CD4-positive, alpha-beta T cell (primary cell): ENCODE measurements at regions of chr17 and their contacts with region 1.

Region 1: GRCh38 chr17:45021607-45022287 is 29.7 kb downstream of the DCAKD start:
- DNase-seq: peak; percentile 29 to 85 (median 58)
- ATAC-seq: peak; percentile 85
- H3K4me3 ChIP-seq: peak overlapping the region; percentile 44
- H3K4me3 Mint-ChIP-seq: peak overlapping the region; percentile 39
- H3K27ac ChIP-seq: no peak overlapping the region
- H3K27ac Mint-ChIP-seq: no peak overlapping the region
- H3K4me1 ChIP-seq: peaks cover 36% of the 10 kb centered on the region
- H3K4me1 Mint-ChIP-seq: peaks cover 24% of the 10 kb centered on the region
- H3K27me3 ChIP-seq: peaks cover 34 to 40% of the 10 kb centered on the region in 2 experiments
- H3K27me3 Mint-ChIP-seq: peaks cover 39% of the 10 kb centered on the region
- CTCF ChIP-seq: peak; percentile 66

Region 2: DNA sequence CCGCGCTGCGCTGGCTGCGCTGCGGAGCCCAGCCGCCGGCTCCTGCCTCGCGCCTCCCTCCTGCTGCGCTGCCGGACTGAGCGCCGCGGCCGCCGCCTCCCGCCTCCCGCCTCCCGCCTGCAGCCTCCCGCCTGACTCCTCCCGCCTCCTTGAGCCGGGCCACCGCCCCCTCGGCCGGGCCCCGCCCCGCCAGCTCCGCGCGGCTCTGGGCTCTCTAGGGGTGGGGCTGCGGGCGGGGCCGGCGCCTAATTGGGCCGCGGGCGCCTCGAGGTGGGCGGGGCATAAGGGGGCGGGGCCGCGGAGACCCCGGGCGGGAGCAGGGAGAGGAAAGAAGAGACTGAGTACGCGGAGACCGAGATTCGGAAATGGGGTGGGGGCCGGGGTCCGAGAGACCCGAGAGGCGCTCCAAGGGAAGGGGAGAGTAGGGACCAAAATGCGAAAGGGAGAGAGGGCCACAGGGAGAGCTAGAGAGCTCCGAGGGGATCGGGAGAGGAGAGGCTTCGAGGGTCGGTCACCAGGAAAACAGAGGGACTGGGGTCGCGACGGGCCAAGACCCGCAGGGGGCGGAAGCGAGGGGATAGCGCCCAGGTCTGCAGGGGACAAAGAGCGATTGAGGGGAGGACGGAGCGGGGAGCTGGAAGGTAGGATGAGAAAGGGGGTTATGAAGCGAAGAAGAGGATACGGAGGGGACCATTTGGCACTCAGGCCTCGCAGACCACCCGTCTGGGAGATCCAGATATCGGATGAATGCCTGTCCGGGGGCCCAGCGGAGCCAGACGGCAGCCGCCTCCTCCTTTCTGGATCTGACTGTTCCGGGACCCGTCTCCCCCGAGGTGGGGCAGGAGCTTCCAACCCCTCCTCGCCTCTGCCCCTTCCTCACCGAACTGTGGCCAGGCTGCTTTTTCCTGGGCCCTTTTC is 53.3 kb before region 1 on chr17 and contains the start of gene C1QL1:
- CTCF ChIA-PET with region 1: no interaction called
- POLR2A ChIA-PET with region 1: no interaction called
- intact Hi-C with region 1: loop called in 1 of 2 experiments (anchors 5 kb)
- DNase-seq: peak; percentile 64 to 93 (median 85)
- ATAC-seq: peak; percentile 92
- H3K4me3 ChIP-seq: peak within 1 kb of the TSS; percentile 54
- H3K4me3 Mint-ChIP-seq: peak within 1 kb of the TSS; percentile 83
- H3K27ac ChIP-seq: no peak within 1 kb of the TSS
- H3K27ac Mint-ChIP-seq: no peak within 1 kb of the TSS
- H3K4me1 ChIP-seq: peaks cover 42% of the 10 kb centered on the region
- H3K4me1 Mint-ChIP-seq: peaks cover 32% of the 10 kb centered on the region
- H3K27me3 ChIP-seq: peaks cover 42 to 54% of the 10 kb centered on the region in 2 experiments
- H3K27me3 Mint-ChIP-seq: peaks cover 63% of the 10 kb centered on the region
- CTCF ChIP-seq: peak; percentile 28
- total RNA-seq, gene C1QL1: not detected

Region 3: DNA sequence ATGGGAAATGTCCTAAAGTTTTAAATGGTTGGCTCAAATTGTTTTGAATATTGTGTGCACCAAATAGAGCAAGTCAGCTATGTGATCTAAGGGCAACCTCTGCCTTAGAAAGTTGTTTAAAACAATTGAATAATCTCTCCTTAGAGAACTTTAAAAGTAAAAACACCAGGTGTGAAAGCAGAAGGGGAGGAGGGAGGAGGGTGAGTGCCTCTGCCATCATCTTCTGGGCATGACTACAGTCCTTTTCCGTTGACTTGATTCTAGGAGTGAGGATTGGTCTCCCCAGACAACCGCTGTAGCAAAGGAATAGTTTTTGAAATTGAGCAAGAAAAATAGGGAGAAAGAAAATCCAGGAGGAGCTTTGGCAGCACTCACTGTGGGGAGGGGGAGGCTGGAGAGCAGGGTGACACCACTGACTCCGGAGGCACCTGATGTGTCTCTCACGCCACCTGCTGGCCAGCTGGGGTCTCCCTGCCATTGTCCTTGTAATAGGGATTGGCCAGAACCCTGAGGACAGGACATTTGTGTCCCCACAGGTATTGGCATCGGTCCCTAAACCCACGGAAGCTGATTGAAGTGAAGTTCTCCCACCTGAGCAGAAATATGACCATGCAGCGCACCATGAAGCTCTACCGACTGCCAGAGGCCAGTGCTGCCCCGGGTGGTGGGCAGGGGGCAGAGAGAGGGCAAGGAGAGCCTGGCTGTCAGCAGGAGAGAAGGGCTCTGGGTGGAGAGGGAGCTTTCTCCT is 77.3 kb after region 1 on chr17:
- CTCF ChIA-PET with region 1: interaction called, 3 read pairs
- POLR2A ChIA-PET with region 1: no interaction called
- intact Hi-C with region 1: loop called in 1 of 2 experiments (anchors 5 kb)
- DNase-seq: peak; percentile 61 to 86 (median 72)
- ATAC-seq: peak; percentile 90
- H3K4me3 ChIP-seq: no peak overlapping the region
- H3K4me3 Mint-ChIP-seq: no peak overlapping the region
- H3K27ac ChIP-seq: no peak overlapping the region
- H3K27ac Mint-ChIP-seq: no peak overlapping the region
- H3K4me1 ChIP-seq: no peaks in the 10 kb centered on the region
- H3K4me1 Mint-ChIP-seq: peaks cover 7% of the 10 kb centered on the region
- H3K27me3 ChIP-seq: no peaks in the 10 kb centered on the region
- H3K27me3 Mint-ChIP-seq: no peaks in the 10 kb centered on the region
- CTCF ChIP-seq: peak; percentile 91

Region 4: DNA sequence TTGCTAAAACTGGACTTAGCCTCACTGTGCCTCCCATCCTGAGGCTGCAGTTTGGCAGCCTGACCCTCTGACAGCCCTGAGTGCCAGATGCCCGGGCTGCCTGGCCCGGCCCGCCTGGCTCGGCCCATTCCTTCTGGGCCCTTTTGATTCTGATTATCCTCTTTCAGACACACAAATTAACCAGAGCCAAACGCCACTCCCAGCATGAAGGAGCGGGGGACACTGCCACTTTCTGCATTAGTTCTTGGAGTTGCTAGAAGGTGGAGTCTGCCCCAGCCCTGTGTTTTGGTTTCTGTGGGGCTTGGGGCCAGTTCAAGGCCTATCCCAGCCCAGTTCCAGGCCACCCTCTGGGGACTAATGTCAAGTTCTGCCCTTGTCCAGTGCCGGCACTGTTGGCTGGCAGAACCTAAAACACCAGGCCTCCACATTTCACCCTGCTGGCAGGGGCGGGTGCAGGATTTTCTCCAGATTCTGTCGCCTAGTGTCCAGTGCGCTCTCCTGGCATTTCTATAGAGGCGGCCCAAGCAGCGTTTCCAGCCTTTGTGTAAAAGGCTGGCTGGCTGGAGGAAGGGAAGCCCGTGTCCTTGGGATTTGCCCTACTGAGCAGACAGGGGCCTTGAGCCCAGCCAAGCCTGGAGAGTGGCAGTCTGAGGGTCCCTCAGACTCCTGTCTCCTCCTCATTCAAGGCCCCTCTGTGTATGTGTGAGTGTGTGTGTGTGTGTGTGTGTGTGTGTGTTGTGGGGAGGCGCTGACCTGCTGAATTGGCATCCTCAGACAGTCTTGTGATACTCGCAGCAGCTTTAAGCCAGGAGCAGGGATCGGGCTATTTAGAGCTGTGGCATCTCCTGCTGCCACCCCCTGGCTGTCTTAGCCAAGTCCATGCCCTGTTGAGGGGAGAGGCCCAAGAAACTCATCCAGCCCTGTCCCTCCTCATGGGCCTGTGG is 89.2 kb after region 1 on chr17:
- CTCF ChIA-PET with region 1: no interaction called
- POLR2A ChIA-PET with region 1: no interaction called
- intact Hi-C with region 1: no loop called
- DNase-seq: no peak
- ATAC-seq: no peak
- H3K4me3 ChIP-seq: no peak overlapping the region
- H3K4me3 Mint-ChIP-seq: no peak overlapping the region
- H3K27ac ChIP-seq: no peak overlapping the region
- H3K27ac Mint-ChIP-seq: no peak overlapping the region
- H3K4me1 ChIP-seq: no peaks in the 10 kb centered on the region
- H3K4me1 Mint-ChIP-seq: no peaks in the 10 kb centered on the region
- H3K27me3 ChIP-seq: no peaks in the 10 kb centered on the region
- H3K27me3 Mint-ChIP-seq: no peaks in the 10 kb centered on the region
- CTCF ChIP-seq: no peak